ENCODE measurements at regions of chr12 and their contacts with region 1.

Region 1: DNA sequence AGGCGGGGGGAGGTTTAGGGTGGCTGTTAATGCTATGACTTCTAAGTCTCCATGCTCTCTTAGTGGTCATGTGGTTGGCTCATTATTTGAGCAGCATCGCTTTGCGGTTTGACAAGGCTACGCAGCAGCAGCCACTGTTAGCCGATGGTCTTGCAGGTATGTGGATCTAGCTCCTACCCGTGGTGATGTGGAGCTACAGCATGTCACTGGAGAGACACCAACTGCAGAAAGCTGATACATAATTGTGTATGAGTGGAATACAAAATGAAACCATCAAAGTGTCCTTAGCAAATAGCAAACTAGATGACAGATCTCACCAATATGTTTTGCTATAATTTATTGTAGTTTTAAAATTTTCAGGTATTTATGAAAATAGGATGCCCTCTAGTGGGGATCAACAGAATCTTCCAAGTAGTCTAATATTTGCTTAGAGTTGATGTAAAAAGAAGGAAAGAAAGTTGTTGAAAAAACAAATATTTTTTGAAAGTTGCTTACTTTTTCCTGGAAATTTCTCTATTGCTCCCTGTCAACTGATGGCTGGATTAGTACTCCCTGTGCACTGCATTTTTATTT is 94.9 kb downstream of the NAV3 start:
- DNase-seq: peak; percentile 74 to 84
- H3K4me3 ChIP-seq: no peak overlapping the region
- H3K4me3 Mint-ChIP-seq: no peak overlapping the region
- H3K27ac Mint-ChIP-seq: no peak overlapping the region
- H3K4me1 ChIP-seq: no peaks in the 10 kb centered on the region
- H3K4me1 Mint-ChIP-seq: no peaks in the 10 kb centered on the region
- H3K27me3 ChIP-seq: no peaks in the 10 kb centered on the region
- H3K27me3 Mint-ChIP-seq: no peaks in the 10 kb centered on the region
- CTCF ChIP-seq: peak; percentile 94

Region 2: GRCh38 chr12:77724367-77724957 is 201.2 kb before region 1 on chr12:
- CTCF ChIA-PET with region 1: no interaction called
- POLR2A ChIA-PET with region 1: no interaction called
- intact Hi-C with region 1: loop called (anchors 1 kb)
- DNase-seq: peak in 1 of 2 experiments; percentile 10
- H3K4me3 ChIP-seq: no peak overlapping the region
- H3K4me3 Mint-ChIP-seq: no peak overlapping the region
- H3K27ac Mint-ChIP-seq: no peak overlapping the region
- H3K4me1 ChIP-seq: no peaks in the 10 kb centered on the region
- H3K4me1 Mint-ChIP-seq: no peaks in the 10 kb centered on the region
- H3K27me3 ChIP-seq: no peaks in the 10 kb centered on the region
- H3K27me3 Mint-ChIP-seq: peaks cover 7% of the 10 kb centered on the region
- CTCF ChIP-seq: peak; percentile 47 to 66

Region 3: DNA sequence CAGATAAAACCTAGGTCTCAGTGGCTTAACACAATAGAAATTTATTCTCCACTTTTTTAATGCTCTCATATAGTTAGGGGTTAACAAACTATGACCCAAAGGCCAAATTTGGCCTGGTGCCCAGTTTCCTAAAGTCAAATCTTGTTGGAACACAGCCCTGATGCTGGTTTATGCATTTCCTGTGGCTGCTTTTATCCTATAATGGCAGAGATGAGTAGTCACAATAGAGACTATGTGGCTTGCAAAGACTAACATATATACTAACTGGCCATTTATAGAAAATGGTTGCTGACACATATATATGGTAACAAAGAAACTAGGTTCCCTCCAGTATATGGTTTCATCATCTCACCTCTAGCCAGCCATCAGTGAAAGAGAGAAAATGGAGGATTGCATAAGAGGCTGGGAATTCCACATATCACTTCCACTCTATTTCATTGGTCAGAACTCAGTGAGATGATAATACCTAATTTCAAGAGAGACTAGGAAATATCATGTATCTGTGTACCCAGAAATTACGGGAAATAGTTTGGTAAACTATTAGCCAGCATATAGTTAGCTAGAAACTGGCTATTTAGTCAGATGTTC is 84.1 kb before region 1 on chr12:
- CTCF ChIA-PET with region 1: interaction called, 4 read pairs
- POLR2A ChIA-PET with region 1: no interaction called
- intact Hi-C with region 1: loop called (anchors 5 kb)
- DNase-seq: no peak
- H3K4me3 ChIP-seq: no peak overlapping the region
- H3K4me3 Mint-ChIP-seq: no peak overlapping the region
- H3K27ac Mint-ChIP-seq: no peak overlapping the region
- H3K4me1 ChIP-seq: no peaks in the 10 kb centered on the region
- H3K4me1 Mint-ChIP-seq: no peaks in the 10 kb centered on the region
- H3K27me3 ChIP-seq: no peaks in the 10 kb centered on the region
- H3K27me3 Mint-ChIP-seq: no peaks in the 10 kb centered on the region
- CTCF ChIP-seq: no peak

Measured in Caco-2 (cell line).